ENCODE measurements at regions of chr9 and their contacts with region 1.

Region 1: GRCh38 chr9:136488247-136489214 is 5.7 kb upstream of the SEC16A start:
- DNase-seq: no peak
- H3K4me3 ChIP-seq: no peak overlapping the region
- CTCF ChIP-seq: peak; percentile 96

Region 2: GRCh38 chr9:136255896-136256890 is 232.3 kb before region 1 on chr9:
- CTCF ChIA-PET with region 1: no interaction called
- POLR2A ChIA-PET with region 1: no interaction called
- DNase-seq: no peak
- H3K4me3 ChIP-seq: no peak overlapping the region
- CTCF ChIP-seq: no peak

Region 3: DNA sequence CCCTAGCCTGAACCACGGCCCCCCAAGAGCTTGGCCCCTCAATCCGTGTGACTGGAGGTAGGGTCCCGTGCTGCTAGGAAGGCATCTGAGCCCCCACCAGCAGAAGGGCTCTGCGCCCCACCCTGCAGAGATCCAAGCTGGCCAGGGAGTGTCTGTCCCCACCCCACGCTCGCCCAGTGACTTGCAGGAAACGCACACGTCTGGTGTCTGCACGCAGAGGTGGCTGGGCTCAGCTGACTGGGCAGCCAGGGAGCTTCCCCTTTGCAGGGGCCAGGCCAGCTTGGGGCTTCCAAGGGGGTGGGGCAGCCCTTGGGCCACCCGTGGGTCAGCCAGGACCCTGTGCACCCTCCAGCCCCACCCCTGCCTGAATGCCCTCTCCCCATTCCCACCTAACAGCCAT is 33.0 kb after region 1 on chr9:
- CTCF ChIA-PET with region 1: interaction called, 21 read pairs
- POLR2A ChIA-PET with region 1: no interaction called
- DNase-seq: no peak
- H3K4me3 ChIP-seq: no peak overlapping the region
- CTCF ChIP-seq: no peak

Region 4: GRCh38 chr9:136614372-136614922 is 125.9 kb after region 1 on chr9:
- CTCF ChIA-PET with region 1: interaction called, 27 read pairs
- POLR2A ChIA-PET with region 1: no interaction called
- DNase-seq: no peak
- H3K4me3 ChIP-seq: no peak overlapping the region; the same call in 1 of the 2 replicates
- CTCF ChIP-seq: no peak

Region 5: DNA sequence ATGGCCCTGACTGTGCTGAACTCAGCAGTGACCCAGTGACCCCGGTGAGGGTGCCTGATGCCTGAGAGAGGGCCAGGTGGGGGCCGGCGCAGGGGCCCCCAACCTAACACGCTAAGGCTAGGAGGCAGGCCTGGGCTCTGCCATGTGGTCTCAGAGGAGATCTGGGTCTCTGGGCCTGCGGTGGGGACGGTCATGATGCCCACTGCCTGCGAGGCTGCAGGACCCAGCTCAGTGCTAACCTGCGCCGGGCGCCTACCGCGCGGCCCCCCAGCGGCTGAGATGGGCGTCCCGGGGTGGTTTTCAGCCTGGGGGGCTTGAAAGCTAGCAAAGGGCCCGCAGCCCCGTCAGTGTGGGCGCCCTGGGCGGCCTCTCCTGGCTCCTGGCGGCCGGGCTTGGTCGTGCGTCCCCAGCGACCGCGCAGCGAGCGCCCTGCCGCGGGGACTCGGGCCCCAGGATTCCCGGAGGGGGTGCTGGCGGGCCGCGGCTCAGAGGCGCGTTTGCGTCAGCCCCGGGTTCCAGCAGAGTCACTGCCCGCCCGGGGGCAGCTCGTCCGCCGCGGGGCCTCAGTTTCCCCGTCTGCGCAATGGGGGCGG is 176.7 kb after region 1 on chr9:
- CTCF ChIA-PET with region 1: interaction called, 10 read pairs
- POLR2A ChIA-PET with region 1: no interaction called
- DNase-seq: no peak
- H3K4me3 ChIP-seq: peak overlapping the region; percentile 49
- CTCF ChIP-seq: peak; percentile 23